ENCODE measurements at regions of chr14 and their contacts with region 1.

Region 1: GRCh38 chr14:77862154-77862786 is 62.4 kb downstream of the ADCK1 start:
- DNase-seq: peak; percentile 55 to 95
- H3K4me3 ChIP-seq: no peak overlapping the region
- CTCF ChIP-seq: peak in 1 of 3 donors; percentile 58
- POLR2A ChIP-seq: no peak

Region 2: GRCh38 chr14:77622366-77622971 is 239.8 kb before region 1 on chr14:
- intact Hi-C with region 1: no loop called
- DNase-seq: no peak
- H3K4me3 ChIP-seq: no peak overlapping the region
- CTCF ChIP-seq: no peak
- POLR2A ChIP-seq: no peak

Region 3: GRCh38 chr14:78566026-78566858 is 704.0 kb after region 1 on chr14:
- intact Hi-C with region 1: loop called (anchors 10 kb)
- DNase-seq: peak; percentile 62 to 93
- H3K4me3 ChIP-seq: no peak overlapping the region
- CTCF ChIP-seq: no peak
- POLR2A ChIP-seq: no peak

Measured in lower leg skin (tissue), 4 donors.